AG04449 (cell line): ENCODE measurements at regions of chr5 and their contacts with region 1.

Region 1: DNA sequence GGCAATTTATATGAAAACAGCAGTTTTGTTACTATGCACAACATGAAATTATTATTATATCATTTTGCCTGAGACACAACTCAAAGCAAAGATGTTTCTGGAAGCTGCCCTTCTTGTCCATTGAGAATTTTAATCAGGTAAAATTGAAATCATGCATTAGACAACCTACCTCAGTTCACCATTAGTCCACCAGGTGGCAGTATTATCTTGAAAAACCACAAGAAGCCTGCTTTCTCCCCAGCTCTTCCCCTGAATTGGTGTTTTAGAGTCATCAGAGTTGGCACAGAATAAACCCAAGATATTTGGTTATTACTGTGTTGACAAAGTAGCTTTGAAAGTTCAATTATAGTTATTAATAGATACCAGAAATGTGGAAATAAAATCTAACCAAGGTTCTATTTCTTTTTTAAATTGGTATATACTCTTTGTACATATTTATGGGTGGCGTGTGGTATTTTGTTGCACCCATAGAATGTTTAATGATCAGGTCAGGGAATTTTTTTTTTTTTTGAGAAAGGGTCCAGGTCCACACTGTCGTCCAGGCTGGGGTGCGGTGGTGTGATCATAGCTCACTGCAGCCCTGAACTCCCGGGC is 25.7 kb downstream of the UTP15 start:
- DNase-seq: peak; percentile 81
- H3K4me3 ChIP-seq: no peak overlapping the region
- CTCF ChIP-seq: peak; percentile 28

Region 2: GRCh38 chr5:73625944-73626811 is 35.0 kb after region 1 on chr5 and contains the start of gene ARHGEF28:
- CTCF ChIA-PET with region 1: interaction called, 13 read pairs
- POLR2A ChIA-PET with region 1: interaction called, 3 read pairs
- DNase-seq: no peak
- H3K4me3 ChIP-seq: peak within 1 kb of the TSS; percentile 84
- CTCF ChIP-seq: no peak

Region 3: GRCh38 chr5:73792687-73793320 is 201.6 kb after region 1 on chr5:
- CTCF ChIA-PET with region 1: interaction called, 517 read pairs
- POLR2A ChIA-PET with region 1: interaction called, 4 read pairs
- DNase-seq: no peak
- H3K4me3 ChIP-seq: no peak overlapping the region
- CTCF ChIP-seq: peak; percentile 89

Region 4: GRCh38 chr5:73887683-73888082 is 296.5 kb after region 1 on chr5:
- CTCF ChIA-PET with region 1: interaction called, 11 read pairs
- POLR2A ChIA-PET with region 1: no interaction called
- DNase-seq: no peak
- H3K4me3 ChIP-seq: no peak overlapping the region
- CTCF ChIP-seq: no peak

Region 5: DNA sequence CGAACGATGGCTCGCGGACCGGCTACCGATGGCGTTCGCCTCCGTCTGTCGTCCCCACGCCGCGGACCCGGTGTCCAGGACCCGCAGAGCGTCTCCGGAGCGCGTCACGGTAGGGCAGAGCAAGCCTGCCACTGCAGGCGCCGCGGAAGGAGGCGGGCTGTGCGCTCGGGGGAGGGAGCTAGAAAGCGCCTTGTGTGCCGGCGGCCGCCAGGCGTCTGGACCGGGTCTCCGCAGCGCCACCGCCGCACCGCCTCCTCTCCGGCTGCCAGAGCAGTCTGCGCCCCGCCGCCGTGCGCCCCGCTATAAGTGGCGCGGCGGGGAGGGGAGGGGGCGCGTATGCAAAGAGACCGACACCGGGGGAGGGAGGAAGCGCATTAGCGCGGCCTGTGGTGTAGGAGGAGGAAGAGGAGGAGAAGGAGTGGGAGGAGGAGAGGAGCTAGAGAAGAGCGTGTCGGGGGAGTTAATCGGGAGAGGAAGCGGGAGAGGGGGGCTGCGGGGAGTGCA is 1049.3 kb after region 1 on chr5 and contains the start of gene ENC1:
- CTCF ChIA-PET with region 1: interaction called, 11 read pairs
- POLR2A ChIA-PET with region 1: no interaction called
- DNase-seq: no peak
- H3K4me3 ChIP-seq: peak within 1 kb of the TSS; percentile 96
- CTCF ChIP-seq: peak; percentile 79